IMR-90 (cell line): ENCODE measurements at regions of chr4 and their contacts with region 1.

Region 1: DNA sequence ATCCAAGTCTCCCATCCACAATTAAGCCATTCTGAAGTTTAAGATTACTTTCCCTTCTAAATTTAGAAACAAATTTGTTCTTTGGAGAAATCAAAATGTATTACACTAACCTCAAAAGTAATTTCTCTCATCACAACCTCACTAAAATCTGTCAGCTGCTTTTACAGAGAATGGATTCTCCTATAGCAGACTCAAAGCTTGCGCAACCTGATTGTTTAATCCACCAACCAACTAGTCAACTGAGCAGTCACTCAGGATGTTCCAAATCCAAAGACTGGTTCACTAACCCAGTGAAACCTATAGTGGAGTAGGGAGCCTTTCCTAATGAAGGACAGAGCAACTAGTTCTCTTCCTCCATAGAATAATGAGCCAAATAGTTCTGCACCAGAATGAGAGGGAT is 44.3 kb downstream of the RCHY1 start:
- DNase-seq: no peak
- ATAC-seq: no peak
- H3K4me3 ChIP-seq: no peak overlapping the region
- H3K27ac ChIP-seq: no peak overlapping the region
- H3K4me1 ChIP-seq: no peaks in the 10 kb centered on the region
- H3K27me3 ChIP-seq: no peaks in the 10 kb centered on the region
- CTCF ChIP-seq: no peak
- POLR2A ChIP-seq: no peak
- RAD21 ChIP-seq: no peak

Region 2: DNA sequence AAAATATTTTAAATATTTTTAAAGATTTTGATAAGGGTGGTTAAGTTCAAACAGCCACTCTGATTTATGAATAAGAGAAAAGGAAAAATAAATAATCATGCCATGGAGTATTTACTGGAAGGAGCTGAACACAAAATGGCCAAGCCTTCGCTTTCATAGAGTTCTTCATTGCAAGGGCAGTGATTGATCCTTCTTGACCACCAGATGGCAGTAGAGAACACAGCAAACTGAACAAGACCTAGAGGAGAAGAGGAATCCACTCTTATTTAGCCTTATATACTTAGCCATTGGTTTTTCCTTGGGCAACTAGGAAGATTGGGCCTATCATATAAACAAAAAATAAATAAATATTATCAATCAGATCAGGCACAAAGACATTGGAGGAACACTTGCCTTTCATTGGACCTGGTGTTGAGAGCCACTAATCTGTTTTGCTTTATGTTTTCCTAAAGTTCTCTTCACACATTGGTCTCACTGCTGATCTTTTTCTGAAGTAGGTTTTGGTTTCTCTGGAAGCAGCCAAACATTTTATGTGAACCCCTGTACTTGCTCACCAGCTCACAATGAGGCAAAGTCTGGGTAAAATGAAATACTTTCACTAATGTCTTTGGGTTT is 595.0 kb before region 1 on chr4:
- CTCF ChIA-PET with region 1: interaction called, 5 read pairs
- POLR2A ChIA-PET with region 1: no interaction called
- dilution Hi-C with region 1: no loop called
- in situ Hi-C with region 1: no loop called
- intact Hi-C with region 1: loop called (anchors 2 kb)
- DNase-seq: peak; percentile 84
- ATAC-seq: peak; percentile 96
- H3K4me3 ChIP-seq: no peak overlapping the region
- H3K27ac ChIP-seq: no peak overlapping the region
- H3K4me1 ChIP-seq: no peaks in the 10 kb centered on the region
- H3K27me3 ChIP-seq: peaks cover 3% of the 10 kb centered on the region; the same call in 1 of the 2 replicates
- CTCF ChIP-seq: peak; percentile 86
- POLR2A ChIP-seq: no peak
- RAD21 ChIP-seq: peak; percentile 68

Region 3: GRCh38 chr4:74932816-74933561 is 536.9 kb before region 1 on chr4 and contains the start of gene PARM1:
- CTCF ChIA-PET with region 1: interaction called, 3 read pairs
- POLR2A ChIA-PET with region 1: no interaction called
- dilution Hi-C with region 1: no loop called
- in situ Hi-C with region 1: no loop called
- intact Hi-C with region 1: loop called (anchors 2 kb)
- DNase-seq: peak; percentile 61
- ATAC-seq: peak; percentile 98
- H3K4me3 ChIP-seq: peak within 1 kb of the TSS; percentile 40
- H3K27ac ChIP-seq: no peak within 1 kb of the TSS
- H3K4me1 ChIP-seq: no peaks in the 10 kb centered on the region
- H3K27me3 ChIP-seq: peaks cover 41% of the 10 kb centered on the region
- CTCF ChIP-seq: peak; percentile 68
- POLR2A ChIP-seq: no peak
- RAD21 ChIP-seq: peak; percentile 73
- total RNA-seq, gene PARM1: under 0.01 and 0.18 TPM in 2 replicates

Region 4: DNA sequence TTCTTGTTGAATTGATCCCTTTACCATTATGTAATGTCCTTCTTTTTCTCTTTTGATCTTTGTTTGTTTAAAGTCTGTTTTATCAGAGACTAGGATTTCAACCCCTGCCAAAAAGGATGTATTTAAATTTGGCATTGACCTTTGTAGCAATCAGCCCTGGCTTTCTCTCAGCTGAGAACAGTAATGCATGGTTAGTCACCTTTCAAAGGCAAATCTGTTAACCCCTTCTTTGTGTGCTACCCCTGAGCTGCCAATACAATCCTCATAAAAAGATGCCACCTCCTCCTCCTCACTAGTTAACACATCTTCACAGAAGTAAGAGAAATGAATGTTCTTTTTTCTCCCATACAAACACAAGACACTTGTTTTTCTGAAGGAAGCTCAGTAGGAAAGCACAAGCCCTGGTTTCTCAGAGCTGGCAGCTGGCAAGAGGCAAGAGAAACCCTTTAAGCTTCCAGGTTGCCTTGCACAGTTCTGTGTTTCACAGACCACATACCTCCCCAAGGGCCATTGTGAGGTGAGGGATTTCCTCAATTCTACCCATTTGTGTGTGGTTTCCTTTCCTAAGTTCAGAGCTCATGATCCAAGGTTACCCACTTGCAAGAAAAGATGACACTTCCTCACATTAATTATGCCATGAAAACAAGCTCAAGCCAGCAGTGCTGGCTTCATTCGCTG is 78.3 kb before region 1 on chr4:
- CTCF ChIA-PET with region 1: no interaction called
- POLR2A ChIA-PET with region 1: no interaction called
- dilution Hi-C with region 1: no loop called
- in situ Hi-C with region 1: no loop called
- intact Hi-C with region 1: no loop called
- DNase-seq: no peak
- ATAC-seq: no peak
- H3K4me3 ChIP-seq: no peak overlapping the region
- H3K27ac ChIP-seq: no peak overlapping the region
- H3K4me1 ChIP-seq: no peaks in the 10 kb centered on the region
- H3K27me3 ChIP-seq: no peaks in the 10 kb centered on the region; the same call in 1 of the 2 replicates
- CTCF ChIP-seq: no peak
- POLR2A ChIP-seq: no peak
- RAD21 ChIP-seq: no peak